Activated naive CD8-positive, alpha-beta T cell treated with anti-CD3 and anti-CD28 coated beads, Interleukin-2, amount 10 ng/mL, durations not matched to agents 7 days and 5 days (primary cell): ENCODE measurements at regions of chr17 and their contacts with region 1.

Region 1: DNA sequence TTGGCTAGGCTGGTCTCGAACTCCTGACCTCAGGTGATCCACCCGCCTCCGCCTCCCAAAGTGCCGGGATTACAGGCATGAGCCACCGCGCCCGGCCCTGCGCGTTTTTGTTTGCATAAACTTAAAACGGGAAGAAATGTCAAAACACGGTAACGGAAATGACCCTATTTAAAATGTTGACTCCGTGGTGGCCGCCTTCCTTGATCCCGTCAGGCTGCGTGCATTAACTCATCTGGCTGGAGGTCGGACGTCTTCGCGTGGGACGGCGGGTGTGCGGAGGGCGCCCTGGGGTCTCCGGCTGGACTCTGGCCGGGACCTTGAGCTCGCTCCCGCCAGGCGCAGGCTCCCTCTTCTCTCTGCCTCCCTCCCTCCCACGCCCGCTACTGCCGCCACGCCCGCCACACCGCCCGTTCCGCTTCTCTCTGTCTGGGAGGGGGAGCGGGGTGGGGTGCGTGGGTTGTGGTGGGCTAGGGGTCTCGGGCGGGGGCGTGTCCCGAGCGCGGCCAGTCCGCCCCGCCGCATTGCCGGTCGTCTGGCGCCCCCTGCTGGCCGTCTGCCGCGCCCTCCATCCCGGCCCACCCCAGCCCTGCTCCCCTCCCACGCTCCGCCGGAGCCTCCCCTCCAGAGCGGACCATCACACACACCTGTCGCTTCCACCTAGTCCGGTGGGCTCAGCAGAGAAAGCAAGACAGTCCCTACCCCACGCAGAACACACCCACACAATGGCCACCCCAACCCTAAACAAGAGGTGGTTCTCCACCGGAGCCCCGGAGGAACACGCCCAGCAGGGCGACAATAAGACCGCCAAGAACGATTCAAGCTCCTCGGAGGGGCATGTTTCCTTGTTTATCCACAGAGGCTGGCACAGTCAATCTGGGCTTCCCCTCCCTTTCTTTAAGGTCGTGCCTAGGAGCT is 1.2 kb upstream of the CCDC42 start:
- DNase-seq: peak; percentile 90
- ATAC-seq: peak; percentile 70
- H3K4me3 Mint-ChIP-seq: peak overlapping the region; percentile 92
- H3K27ac Mint-ChIP-seq: peak overlapping the region; percentile 93
- H3K4me1 Mint-ChIP-seq: peaks cover 13% of the 10 kb centered on the region
- H3K27me3 Mint-ChIP-seq: peaks cover 3% of the 10 kb centered on the region

Region 2: DNA sequence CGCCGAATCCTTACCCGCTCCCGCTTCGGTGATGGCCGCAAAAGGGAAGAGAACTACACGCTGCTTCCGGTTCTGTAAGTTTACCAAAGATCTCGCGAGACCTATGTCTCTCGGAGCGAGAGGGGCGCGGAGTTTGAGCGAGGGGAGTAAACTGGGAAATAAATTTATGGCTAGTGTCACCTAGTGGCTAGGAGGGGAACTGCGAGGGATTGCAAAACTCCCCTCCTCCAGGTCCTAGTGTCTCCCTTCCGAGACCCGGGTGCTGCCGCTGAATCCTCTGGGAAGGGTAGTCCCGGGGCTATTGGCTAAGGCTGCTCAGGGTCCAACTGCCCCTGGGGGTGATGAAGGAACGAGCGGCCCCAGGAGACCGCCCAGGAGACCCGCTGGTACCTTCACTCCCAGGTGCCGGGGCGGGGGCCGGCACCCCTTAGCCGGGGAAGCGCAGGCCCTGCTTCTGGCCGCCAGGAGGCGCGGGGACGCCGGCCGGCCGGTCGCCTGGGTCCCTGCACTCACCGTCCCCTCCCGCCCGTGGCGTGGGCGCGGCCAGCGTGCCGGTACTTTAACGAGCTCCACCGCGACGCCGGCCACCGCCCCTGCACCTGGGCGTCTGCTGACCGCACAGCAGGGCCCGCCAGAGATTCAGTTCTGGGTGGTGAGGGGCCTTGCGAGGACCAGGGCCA is 362.6 kb before region 1 on chr17 and contains the start of gene RPL26:
- POLR2A ChIA-PET with region 1: interaction called, 12 read pairs
- DNase-seq: peak; percentile 96
- ATAC-seq: peak; percentile 96
- H3K4me3 Mint-ChIP-seq: peak within 1 kb of the TSS; percentile 92
- H3K27ac Mint-ChIP-seq: peak within 1 kb of the TSS; percentile 88
- H3K4me1 Mint-ChIP-seq: peaks cover 43% of the 10 kb centered on the region
- H3K27me3 Mint-ChIP-seq: no peaks in the 10 kb centered on the region
- total RNA-seq, gene RPL26: 1,984 to 2,045 TPM

Region 3: GRCh38 chr17:8409966-8410864 is 335.6 kb before region 1 on chr17:
- POLR2A ChIA-PET with region 1: interaction called, 12 read pairs
- DNase-seq: peak; percentile 80
- ATAC-seq: peak; percentile 57
- H3K4me3 Mint-ChIP-seq: no peak overlapping the region
- H3K27ac Mint-ChIP-seq: no peak overlapping the region
- H3K4me1 Mint-ChIP-seq: peaks cover 38% of the 10 kb centered on the region
- H3K27me3 Mint-ChIP-seq: peaks cover 29% of the 10 kb centered on the region

Region 4: DNA sequence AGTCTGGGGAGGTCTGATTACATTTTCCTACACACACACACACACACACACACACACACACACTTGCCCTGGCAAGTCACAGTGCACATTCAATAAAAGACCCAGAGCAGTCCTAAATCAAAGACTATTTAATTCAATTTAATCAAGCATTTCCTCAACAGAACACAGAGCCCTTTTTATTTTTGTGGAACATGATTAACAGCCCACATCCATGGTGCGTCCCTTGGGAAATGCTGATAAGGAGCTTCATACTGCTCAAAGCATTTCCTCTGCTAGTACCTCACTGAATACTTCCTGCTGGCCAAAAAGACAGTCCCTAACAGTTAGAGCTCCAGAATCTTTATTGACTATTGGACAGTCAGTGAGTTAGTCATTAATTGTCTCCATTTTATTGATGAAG is 72.2 kb before region 1 on chr17:
- POLR2A ChIA-PET with region 1: no interaction called
- DNase-seq: no peak
- ATAC-seq: no peak
- H3K4me3 Mint-ChIP-seq: no peak overlapping the region
- H3K27ac Mint-ChIP-seq: no peak overlapping the region
- H3K4me1 Mint-ChIP-seq: no peaks in the 10 kb centered on the region
- H3K27me3 Mint-ChIP-seq: peaks cover 7% of the 10 kb centered on the region

Region 5: DNA sequence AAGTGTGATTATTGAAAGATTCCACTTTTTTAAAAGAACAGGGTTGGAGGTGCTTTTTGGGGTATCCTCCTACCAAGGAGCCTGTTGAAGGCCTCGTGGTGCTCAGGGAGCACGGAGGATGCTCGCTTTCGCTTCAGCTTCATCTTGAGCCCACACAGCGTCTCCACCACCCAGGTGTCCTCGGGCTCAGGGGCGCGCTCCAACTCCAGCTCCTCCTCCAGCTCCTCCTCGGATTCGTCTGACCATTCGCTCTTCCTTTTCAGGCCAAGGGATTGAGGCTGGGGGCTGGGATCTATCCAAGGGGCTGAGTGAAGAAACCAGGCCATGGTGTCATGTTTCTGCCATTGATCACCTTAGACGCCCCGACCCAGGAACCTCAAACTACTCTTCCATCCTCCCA is 11.3 kb after region 1 on chr17:
- POLR2A ChIA-PET with region 1: no interaction called
- DNase-seq: no peak
- ATAC-seq: no peak
- H3K4me3 Mint-ChIP-seq: no peak overlapping the region
- H3K27ac Mint-ChIP-seq: no peak overlapping the region
- H3K4me1 Mint-ChIP-seq: no peaks in the 10 kb centered on the region
- H3K27me3 Mint-ChIP-seq: peaks cover 27% of the 10 kb centered on the region